ENCODE measurements at regions of chr4 and their contacts with region 1.

Region 1: DNA sequence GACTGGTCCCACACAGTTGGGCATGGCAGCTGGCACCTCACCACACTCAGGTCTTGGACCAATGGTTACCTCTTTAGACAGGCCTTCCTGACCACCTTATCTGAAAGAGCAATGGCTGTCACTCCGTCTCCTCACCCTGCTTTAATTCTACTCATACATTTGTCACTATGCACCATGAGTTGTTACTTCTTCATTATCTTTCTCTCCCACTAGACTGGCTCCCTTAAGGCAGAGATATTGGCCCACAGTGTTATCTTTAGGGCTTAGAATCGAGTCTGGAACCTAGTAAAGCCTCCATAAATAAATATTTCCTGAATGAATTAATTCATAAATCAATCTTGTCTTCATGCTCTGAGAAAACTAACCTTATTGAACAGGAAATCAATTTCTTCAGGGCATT is 46.6 kb downstream of the DCHS2 start:
- DNase-seq: no peak
- H3K4me3 ChIP-seq: no peak overlapping the region
- H3K27ac ChIP-seq: no peak overlapping the region
- H3K4me1 ChIP-seq: no peaks in the 10 kb centered on the region
- H3K27me3 ChIP-seq: no peaks in the 10 kb centered on the region
- CTCF ChIP-seq: no peak

Region 2: DNA sequence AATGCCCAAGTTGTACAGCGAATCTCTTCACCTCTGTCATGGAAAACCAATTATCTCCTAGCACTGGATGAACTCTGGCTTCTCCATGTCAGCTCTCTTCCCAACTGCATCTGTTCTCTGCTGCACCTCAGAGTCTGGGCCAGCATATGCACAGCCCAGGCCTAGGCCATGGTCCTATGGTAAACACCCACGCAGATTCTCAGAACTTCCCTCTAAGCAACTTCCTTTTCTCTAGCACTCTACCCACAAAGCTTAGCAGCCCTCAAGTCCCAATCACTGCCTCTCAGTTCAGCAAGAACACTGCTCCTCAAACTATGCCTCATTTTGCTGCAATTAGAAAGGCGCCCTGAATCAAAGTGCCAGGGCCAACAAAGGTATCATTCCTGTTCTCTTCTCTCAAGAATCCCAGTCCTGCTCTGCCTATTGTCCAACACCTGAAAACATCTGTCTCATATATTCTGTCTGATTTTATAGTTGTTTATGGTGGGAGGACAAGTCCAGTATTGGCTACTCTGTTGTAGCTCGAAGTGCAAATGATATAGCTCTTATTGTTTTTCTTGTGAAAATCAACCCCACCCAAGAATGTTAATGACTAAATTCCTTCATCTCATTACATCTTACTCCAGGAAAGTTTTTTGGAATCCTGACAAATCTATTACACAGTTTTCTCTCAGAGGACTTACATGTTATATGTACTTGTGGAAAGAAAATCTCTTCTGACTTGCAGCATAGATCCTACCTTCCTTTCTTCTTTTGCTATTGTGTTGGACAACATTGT is 38.8 kb before region 1 on chr4:
- CTCF ChIA-PET with region 1: no interaction called
- dilution Hi-C with region 1: no loop called
- in situ Hi-C with region 1: no loop called
- intact Hi-C with region 1: loop called (anchors 5 kb)
- DNase-seq: no peak
- H3K4me3 ChIP-seq: no peak overlapping the region
- H3K27ac ChIP-seq: no peak overlapping the region
- H3K4me1 ChIP-seq: no peaks in the 10 kb centered on the region
- H3K27me3 ChIP-seq: peaks cover 1% of the 10 kb centered on the region
- CTCF ChIP-seq: no peak

Region 3: GRCh38 chr4:154491341-154492271 is 46.6 kb after region 1 on chr4 and contains the start of gene DCHS2:
- CTCF ChIA-PET with region 1: no interaction called
- dilution Hi-C with region 1: no loop called
- in situ Hi-C with region 1: no loop called
- intact Hi-C with region 1: loop called (anchors 5 kb)
- DNase-seq: peak; percentile 48
- H3K4me3 ChIP-seq: peak within 1 kb of the TSS; percentile 42 to 54 (median 53)
- H3K27ac ChIP-seq: no peak within 1 kb of the TSS
- H3K4me1 ChIP-seq: peaks cover 15% of the 10 kb centered on the region
- H3K27me3 ChIP-seq: peaks cover 15% of the 10 kb centered on the region
- CTCF ChIP-seq: no peak
- total RNA-seq, gene DCHS2: 0.17 TPM in 1 of 2 donors, not detected in the other

Measured in mammary epithelial cell (primary cell).